HepG2 (cell line): ENCODE measurements at regions of chr9 and their contacts with region 1.

Region 1: GRCh38 chr9:38026021-38026809 is 42.8 kb downstream of the SHB start:
- DNase-seq: peak; percentile 29
- ATAC-seq: peak; percentile 9
- H3K4me3 ChIP-seq: no peak overlapping the region
- H3K27ac ChIP-seq: peak overlapping the region; percentile 51
- H3K4me1 ChIP-seq: peaks cover 100% of the 10 kb centered on the region
- H3K27me3 ChIP-seq: no peaks in the 10 kb centered on the region
- CTCF ChIP-seq: no peak
- EP300 ChIP-seq: no peak
- POLR2A ChIP-seq: no peak; a peak in 1 of 4 replicates
- RAD21 ChIP-seq: no peak

Region 2: GRCh38 chr9:37963936-37964739 is 62.1 kb before region 1 on chr9:
- CTCF ChIA-PET with region 1: no interaction called
- POLR2A ChIA-PET with region 1: interaction called, 11 read pairs
- in situ Hi-C with region 1: no loop called
- intact Hi-C with region 1: no loop called
- DNase-seq: peak; percentile 94
- ATAC-seq: peak; percentile 83
- H3K4me3 ChIP-seq: peak overlapping the region in 1 of 3 experiments; percentile 42; a peak in 2 of 6 replicates
- H3K27ac ChIP-seq: peak overlapping the region; percentile 65
- H3K4me1 ChIP-seq: peaks cover 78% of the 10 kb centered on the region
- H3K27me3 ChIP-seq: no peaks in the 10 kb centered on the region
- CTCF ChIP-seq: peak; percentile 21; the same call in 1 of the 2 replicates
- EP300 ChIP-seq: peak in 1 of 2 experiments; percentile 56; a peak in 2 of 4 replicates
- POLR2A ChIP-seq: no peak
- RAD21 ChIP-seq: no peak

Region 3: DNA sequence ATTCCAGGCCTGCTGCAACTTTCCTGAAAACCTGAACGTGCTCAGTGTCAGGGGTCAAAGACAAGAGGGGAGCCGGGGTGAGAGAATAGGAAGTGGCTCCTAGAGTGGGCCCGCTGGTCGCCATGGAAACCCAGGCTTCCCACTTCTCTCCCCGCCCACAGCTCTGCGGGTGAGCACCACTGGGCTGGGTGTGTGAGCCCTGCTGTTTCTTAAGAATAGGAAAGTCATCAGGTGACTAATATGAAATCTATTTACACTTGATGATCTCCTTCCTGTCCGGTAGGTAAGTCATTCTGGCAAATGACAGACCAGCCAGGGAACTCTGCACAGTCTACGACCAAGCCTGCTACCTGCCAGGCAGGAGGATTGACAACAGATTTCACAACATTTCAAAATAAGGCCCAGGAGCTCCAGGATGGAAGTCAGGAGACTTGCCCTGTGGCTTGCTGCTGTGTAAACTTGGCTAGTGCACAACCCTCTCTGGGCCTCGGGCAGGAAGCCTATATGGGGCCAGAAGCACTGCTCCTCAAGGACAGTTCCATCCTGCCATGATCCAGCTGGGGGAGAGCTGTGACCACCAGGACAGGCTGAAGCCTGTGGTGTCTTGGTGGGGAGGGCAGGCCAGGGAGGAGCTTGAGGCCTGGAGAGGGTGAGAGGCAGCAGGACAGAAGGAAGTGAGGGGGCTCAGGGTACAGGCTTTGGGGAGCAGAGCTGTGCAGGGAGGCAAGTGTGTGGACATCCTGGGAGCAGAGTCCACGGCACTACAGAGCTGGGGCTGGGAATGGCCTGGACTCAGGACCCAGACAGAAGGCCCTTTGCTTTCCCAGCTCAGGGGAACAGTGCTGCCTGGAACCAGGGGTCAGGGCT is 17.8 kb before region 1 on chr9:
- CTCF ChIA-PET with region 1: no interaction called
- POLR2A ChIA-PET with region 1: interaction called, 44 read pairs
- in situ Hi-C with region 1: no loop called
- intact Hi-C with region 1: no loop called
- DNase-seq: peak; percentile 76
- ATAC-seq: peak; percentile 94
- H3K4me3 ChIP-seq: peak overlapping the region in 1 of 3 experiments; percentile 15; a peak in 1 of 6 replicates
- H3K27ac ChIP-seq: peak overlapping the region; percentile 69
- H3K4me1 ChIP-seq: peaks cover 51% of the 10 kb centered on the region
- H3K27me3 ChIP-seq: no peaks in the 10 kb centered on the region
- CTCF ChIP-seq: peak; percentile 37; the same call in 1 of the 2 replicates
- EP300 ChIP-seq: peak in 1 of 2 experiments; percentile 14; a peak in 1 of 4 replicates
- POLR2A ChIP-seq: no peak
- RAD21 ChIP-seq: 0 out of 2 replicates have a peak, but pooled peaks have one; percentile 43

Region 4: GRCh38 chr9:38047301-38048251 is 21.4 kb after region 1 on chr9:
- CTCF ChIA-PET with region 1: no interaction called
- POLR2A ChIA-PET with region 1: interaction called, 47 read pairs
- in situ Hi-C with region 1: no loop called
- intact Hi-C with region 1: no loop called
- DNase-seq: peak; percentile 99
- ATAC-seq: peak; percentile 94
- H3K4me3 ChIP-seq: peak overlapping the region; percentile 8 to 54 (median 26); a peak in 5 of 6 replicates
- H3K27ac ChIP-seq: peak overlapping the region; percentile 92
- H3K4me1 ChIP-seq: peaks cover 95% of the 10 kb centered on the region
- H3K27me3 ChIP-seq: no peaks in the 10 kb centered on the region
- CTCF ChIP-seq: peak; percentile 24
- EP300 ChIP-seq: peak; percentile 91
- POLR2A ChIP-seq: peak; percentile 73 to 82
- RAD21 ChIP-seq: peak; percentile 35; the same call in 1 of the 2 replicates

Region 5: DNA sequence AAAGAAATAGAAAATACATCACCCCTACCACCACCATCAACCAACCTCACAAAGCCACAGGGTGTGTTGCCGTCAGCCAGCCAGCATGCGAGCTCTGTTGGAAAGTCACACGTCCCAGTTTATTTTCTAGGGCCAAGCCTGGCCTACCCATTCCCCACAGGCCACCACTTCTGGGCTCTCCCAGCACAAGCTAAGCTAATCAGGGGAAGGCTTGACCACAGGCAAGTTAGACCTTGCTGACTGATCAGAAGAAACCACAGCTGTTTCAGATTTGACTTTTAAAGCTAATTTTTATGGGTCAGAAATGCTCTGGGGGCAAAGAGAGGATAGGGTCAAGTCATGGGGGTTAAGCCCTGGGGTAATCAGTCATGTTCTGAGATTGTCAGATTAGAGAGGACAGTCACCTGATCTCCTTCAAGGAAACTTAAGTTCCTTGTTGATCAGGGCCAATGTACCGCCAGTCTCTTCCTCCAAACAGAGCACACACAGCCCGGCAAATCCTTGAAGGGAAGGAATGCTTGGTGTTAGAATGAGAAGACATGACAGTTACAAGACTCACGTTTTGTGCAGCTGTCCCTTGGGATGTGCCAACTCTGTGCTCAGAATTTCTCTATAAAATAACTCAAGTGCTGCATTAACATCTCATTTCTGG is 35.2 kb after region 1 on chr9:
- CTCF ChIA-PET with region 1: no interaction called
- POLR2A ChIA-PET with region 1: interaction called, 14 read pairs
- in situ Hi-C with region 1: loop called (anchors 5 kb)
- intact Hi-C with region 1: loop called (anchors 2 kb)
- DNase-seq: no peak
- ATAC-seq: no peak
- H3K4me3 ChIP-seq: no peak overlapping the region; a peak in 1 of 6 replicates
- H3K27ac ChIP-seq: peak overlapping the region; percentile 83
- H3K4me1 ChIP-seq: peaks cover 99% of the 10 kb centered on the region
- H3K27me3 ChIP-seq: no peaks in the 10 kb centered on the region; a peak in 1 of 5 replicates
- CTCF ChIP-seq: no peak
- EP300 ChIP-seq: no peak
- POLR2A ChIP-seq: no peak
- RAD21 ChIP-seq: no peak

Region 6: GRCh38 chr9:38068866-38069629 is 42.8 kb after region 1 on chr9 and contains the start of gene SHB:
- CTCF ChIA-PET with region 1: no interaction called
- POLR2A ChIA-PET with region 1: interaction called, 14 read pairs
- in situ Hi-C with region 1: loop called (anchors 5 kb)
- intact Hi-C with region 1: loop called (anchors 2 kb)
- DNase-seq: peak; percentile 56
- ATAC-seq: peak; percentile 71
- H3K4me3 ChIP-seq: peak within 1 kb of the TSS; percentile 84 to 96 (median 95)
- H3K27ac ChIP-seq: peak within 1 kb of the TSS; percentile 93
- H3K4me1 ChIP-seq: peaks cover 46% of the 10 kb centered on the region
- H3K27me3 ChIP-seq: no peaks in the 10 kb centered on the region; a peak in 1 of 5 replicates
- CTCF ChIP-seq: no peak
- EP300 ChIP-seq: no peak
- POLR2A ChIP-seq: peak in 1 of 2 experiments; percentile 84; a peak in 2 of 4 replicates
- RAD21 ChIP-seq: peak; percentile 68
- total RNA-seq, gene SHB: 14.7 and 19.4 TPM in 2 replicates

Region 7: DNA sequence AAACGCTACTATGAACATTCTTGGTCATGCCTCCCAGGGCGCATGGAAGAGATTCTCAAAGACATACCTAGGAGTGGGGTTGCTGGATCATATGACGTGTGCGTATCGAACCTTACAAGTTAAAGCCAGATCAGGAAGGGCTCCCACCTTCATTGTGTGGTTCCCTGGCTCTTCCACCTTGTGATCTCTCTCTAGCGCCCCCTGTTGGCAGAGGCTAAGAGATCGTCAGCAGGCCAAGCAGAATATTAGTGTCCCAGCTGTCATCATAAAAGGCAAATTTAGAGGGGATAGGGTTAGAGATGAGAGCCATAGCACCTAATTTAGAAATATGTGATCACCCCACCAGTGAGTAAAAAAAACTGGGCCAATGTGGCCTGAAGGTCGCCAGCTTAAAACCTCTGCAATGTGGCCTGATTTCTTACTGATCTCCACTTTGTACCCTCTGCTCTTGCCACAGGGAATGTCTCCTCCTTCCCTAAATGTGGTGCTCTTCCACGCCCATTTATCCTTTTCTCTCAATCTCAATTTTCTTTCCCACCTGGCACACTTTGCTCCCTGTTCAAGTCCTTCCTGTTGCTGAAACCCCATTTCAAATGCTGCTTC is 134.5 kb after region 1 on chr9:
- CTCF ChIA-PET with region 1: no interaction called
- POLR2A ChIA-PET with region 1: no interaction called
- in situ Hi-C with region 1: no loop called
- intact Hi-C with region 1: loop called (anchors 10 kb)
- DNase-seq: peak; percentile 57
- ATAC-seq: peak; percentile 86
- H3K4me3 ChIP-seq: no peak overlapping the region
- H3K27ac ChIP-seq: no peak overlapping the region
- H3K4me1 ChIP-seq: no peaks in the 10 kb centered on the region
- H3K27me3 ChIP-seq: peaks cover 0 to 11% of the 10 kb centered on the region in 2 experiments; a peak in 2 of 5 replicates
- CTCF ChIP-seq: peak; percentile 84
- EP300 ChIP-seq: no peak
- POLR2A ChIP-seq: no peak
- RAD21 ChIP-seq: peak; percentile 22